Endothelial cell of umbilical vein (primary cell): ENCODE measurements at regions of chr13 and their contacts with region 1.

Region 1: DNA sequence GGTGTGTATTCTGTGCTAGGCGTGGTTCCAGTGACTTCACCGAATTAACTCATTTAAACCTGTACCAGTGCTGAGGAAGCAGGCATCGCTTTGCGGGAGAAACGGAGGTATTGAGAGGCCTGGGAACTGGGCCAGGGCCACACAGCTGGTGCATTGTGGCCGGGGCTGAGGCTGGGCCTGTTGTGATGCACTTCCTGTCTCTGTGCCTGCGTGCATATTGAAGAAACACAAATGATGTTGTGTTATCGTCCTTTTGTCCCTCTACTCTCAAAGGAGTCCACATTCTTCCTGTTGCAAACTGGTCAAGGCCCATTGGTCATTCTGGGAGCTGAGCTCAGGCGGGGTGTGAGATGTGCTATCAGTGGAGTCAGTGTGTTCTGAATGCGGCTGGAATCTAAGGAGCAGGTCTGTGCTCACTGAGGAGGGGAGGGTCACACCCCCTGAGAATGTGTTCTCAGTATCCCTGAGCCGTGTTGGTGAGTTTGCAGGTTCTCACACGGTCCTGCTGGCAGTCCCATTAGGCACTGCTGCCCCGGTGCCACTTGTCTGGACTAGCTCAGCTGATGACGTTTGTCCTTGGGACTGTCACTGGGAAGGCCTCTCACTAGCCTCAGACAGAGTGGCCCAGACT is 62.1 kb downstream of the ARHGEF7 start:
- DNase-seq: peak; percentile 95
- H3K4me3 ChIP-seq: no peak overlapping the region
- H3K27ac ChIP-seq: peak overlapping the region; percentile 98
- H3K4me1 ChIP-seq: peaks cover 25% of the 10 kb centered on the region
- H3K27me3 ChIP-seq: no peaks in the 10 kb centered on the region
- CTCF ChIP-seq: no peak
- POLR2A ChIP-seq: peak; percentile 35

Region 2: DNA sequence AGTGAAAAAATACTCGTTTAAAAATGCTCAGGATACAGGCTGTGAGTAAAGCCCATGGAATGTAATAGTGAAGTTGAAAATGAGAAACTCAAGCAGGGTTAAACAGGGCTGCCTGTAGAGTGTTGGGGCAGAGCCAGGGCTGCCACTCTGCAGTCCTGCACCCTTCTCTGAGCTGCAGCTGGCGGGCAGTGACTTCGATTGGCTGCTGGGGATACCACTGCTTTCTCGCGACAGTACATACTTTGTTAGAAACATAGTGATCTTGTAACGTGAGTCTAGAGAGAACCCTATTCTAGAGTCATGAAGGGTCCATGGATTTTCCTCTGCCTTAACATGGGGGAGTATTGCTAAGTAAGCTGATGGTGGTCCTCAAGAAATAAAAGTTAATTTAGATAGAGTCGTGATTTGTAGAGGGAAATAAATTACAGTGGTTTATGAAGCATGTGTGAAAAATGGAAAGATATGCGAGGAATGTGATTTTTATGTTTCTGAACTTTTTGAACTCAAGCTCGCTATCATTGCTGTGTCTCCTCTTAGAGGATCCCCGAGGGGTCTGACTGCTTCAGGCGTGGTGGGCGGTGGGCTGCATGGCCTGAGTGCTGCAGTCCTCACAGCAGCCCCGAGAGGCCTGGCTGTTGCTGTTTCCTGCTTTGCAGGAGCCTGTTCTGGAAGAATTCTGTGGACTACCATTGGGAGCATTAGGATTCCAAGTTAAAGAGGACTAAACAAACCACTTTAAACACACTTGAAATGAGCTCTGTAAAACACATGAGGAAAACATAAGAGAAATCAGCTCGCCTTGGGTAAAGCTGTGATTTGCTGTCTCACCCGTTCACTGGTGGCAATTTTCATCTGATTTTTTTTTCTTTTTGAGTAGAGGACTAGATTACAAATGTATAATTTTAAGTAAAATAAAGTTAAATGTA is 33.6 kb after region 1 on chr13:
- CTCF ChIA-PET with region 1: interaction called, 3 read pairs
- POLR2A ChIA-PET with region 1: no interaction called
- dilution Hi-C with region 1: no loop called
- intact Hi-C with region 1: loop called (anchors 2 kb)
- DNase-seq: peak; percentile 75
- H3K4me3 ChIP-seq: no peak overlapping the region
- H3K27ac ChIP-seq: peak overlapping the region; percentile 43
- H3K4me1 ChIP-seq: peaks cover 38% of the 10 kb centered on the region
- H3K27me3 ChIP-seq: no peaks in the 10 kb centered on the region
- CTCF ChIP-seq: no peak
- POLR2A ChIP-seq: no peak

Region 3: GRCh38 chr13:111346106-111346680 is 169.0 kb after region 1 on chr13:
- CTCF ChIA-PET with region 1: no interaction called
- POLR2A ChIA-PET with region 1: no interaction called
- dilution Hi-C with region 1: no loop called
- intact Hi-C with region 1: no loop called
- DNase-seq: no peak
- H3K4me3 ChIP-seq: no peak overlapping the region
- H3K27ac ChIP-seq: no peak overlapping the region
- H3K4me1 ChIP-seq: no peaks in the 10 kb centered on the region
- H3K27me3 ChIP-seq: no peaks in the 10 kb centered on the region
- CTCF ChIP-seq: no peak
- POLR2A ChIP-seq: no peak